Adrenal gland (tissue), 19 donors: ENCODE measurements at regions of chr17 and their contacts with region 1.

Region 1: DNA sequence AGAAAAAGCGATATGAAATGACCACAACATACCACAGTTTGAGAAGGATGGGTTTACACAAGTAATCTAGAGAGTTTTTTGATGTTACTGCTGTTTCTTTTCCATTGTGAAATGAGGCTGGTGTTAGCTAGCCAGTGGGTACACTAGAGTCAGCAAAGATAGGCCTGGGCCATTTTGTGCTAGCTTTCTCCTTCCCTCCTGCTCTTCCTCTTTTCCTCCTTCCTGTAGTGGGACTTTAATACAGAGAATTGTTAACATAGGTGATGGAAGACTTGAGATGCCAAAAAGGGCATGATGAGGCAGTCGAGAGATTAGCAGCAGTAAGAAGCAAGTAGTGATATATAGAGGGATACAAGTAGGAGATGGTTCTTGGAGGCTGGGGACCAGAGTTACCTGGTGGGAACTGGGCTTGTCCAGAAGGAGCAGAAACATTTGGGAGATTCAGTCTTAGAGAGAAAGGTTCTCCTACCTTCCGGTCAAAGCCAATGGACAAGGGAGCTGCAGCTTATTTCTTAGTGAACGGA is 7.7 kb downstream of the NSRP1 start:
- DNase-seq: no peak
- H3K4me3 ChIP-seq: no peak overlapping the region
- H3K27ac ChIP-seq: no peak overlapping the region
- H3K4me1 ChIP-seq: peaks cover 0 to 9% of the 10 kb centered on the region in 2 donors
- H3K27me3 ChIP-seq: no peaks in the 10 kb centered on the region
- CTCF ChIP-seq: no peak
- POLR2A ChIP-seq: no peak

Region 2: GRCh38 chr17:30031214-30031869 is 93.0 kb before region 1 on chr17:
- intact Hi-C with region 1: no loop called
- DNase-seq: no peak
- H3K4me3 ChIP-seq: no peak overlapping the region
- H3K27ac ChIP-seq: no peak overlapping the region
- H3K4me1 ChIP-seq: no peaks in the 10 kb centered on the region
- H3K27me3 ChIP-seq: no peaks in the 10 kb centered on the region
- CTCF ChIP-seq: no peak
- POLR2A ChIP-seq: no peak

Region 3: DNA sequence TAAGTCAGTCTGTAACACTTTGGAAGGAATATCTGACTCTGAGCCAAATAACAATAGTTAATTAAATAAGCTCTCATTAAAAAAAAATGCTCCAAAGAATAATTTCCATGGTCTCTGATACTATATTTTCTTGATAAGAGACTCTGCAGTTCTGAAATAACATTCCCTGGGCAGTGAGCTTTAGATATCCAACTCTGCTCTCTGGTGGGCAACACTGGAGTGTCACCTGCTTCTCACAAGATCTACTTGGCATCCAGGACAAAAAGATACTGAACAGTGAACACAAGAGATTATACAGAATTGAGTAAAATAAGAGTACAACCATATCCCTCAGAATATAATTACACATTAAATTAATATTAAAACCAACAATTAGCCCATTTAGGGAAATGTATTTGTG is 153.7 kb after region 1 on chr17:
- intact Hi-C with region 1: loop called in 1 of 2 experiments (anchors 5 kb)
- DNase-seq: peak in 6 of 7 donors; percentile 38 to 75 (median 50)
- H3K4me3 ChIP-seq: no peak overlapping the region
- H3K27ac ChIP-seq: no peak overlapping the region
- H3K4me1 ChIP-seq: peaks cover 0 to 5% of the 10 kb centered on the region in 2 donors
- H3K27me3 ChIP-seq: no peaks in the 10 kb centered on the region
- CTCF ChIP-seq: peak; percentile 17 to 65 (median 58)
- POLR2A ChIP-seq: no peak